ENCODE measurements at regions of chr4 and their contacts with region 1.

Region 1: GRCh38 chr4:69881173-69881773 is 21.3 kb upstream of the SULT1E1 start:
- DNase-seq: peak; percentile 60

Region 2: DNA sequence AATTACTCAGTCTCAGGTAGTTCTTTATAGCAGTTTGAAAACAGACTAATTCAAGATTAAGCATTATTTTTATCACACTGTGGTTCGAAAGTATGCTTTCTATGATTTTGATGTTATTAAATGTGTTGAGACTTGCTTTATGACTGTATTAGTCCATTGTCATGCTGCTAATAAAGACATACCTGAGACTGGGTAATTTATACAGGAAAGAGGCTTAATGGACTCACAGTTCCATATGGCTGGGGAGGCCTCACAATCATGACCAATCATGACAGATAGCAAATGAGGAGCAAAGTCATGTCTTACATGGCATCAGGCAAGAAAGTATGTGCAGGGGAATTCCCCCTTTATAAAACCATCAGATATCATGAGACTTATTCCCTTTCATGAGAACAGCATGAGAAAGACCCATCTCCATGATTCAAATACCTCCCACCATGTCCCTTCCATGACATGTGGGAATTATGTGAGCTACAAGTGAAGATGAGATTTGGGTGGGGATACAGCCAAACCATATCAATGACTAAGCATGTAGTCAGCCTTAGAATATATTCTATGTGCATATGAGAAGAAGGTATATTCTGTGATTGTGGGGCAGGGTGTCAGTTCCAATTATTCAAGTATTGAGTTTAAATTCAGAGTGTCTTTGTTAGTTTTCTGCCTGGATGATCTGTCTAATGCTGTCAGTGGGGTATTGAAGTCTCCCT is 183.6 kb before region 1 on chr4:
- in situ Hi-C with region 1: loop called (anchors 10 kb)
- DNase-seq: no peak